Breast epithelium (tissue), 4 donors: ENCODE measurements at regions of chr5 and their contacts with region 1.

Region 1: DNA sequence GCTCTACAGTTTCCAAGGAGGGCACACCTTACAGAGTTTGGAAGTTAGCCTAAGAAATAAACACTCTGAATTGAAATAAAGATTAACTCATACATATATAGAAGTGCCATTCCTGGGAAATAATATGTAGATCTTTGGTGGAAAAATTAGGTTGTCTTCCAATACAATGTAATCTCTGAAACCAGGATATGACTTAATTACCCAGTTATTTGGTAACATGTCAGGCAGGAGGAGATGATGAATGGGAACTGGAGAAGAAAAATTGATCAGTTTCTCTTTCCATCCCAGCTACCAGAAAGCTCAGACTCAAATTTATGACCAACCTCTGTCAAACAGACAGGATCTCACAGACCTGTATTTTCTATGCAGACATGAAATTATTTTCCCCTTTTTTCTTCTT is 215.2 kb upstream of the SNX2 start:
- DNase-seq: no peak
- H3K4me3 ChIP-seq: no peak overlapping the region
- H3K27ac ChIP-seq: no peak overlapping the region
- H3K4me1 ChIP-seq: no peaks in the 10 kb centered on the region
- H3K27me3 ChIP-seq: no peaks in the 10 kb centered on the region
- CTCF ChIP-seq: no peak
- POLR2A ChIP-seq: no peak

Region 2: GRCh38 chr5:122468351-122469116 is 91.1 kb before region 1 on chr5:
- intact Hi-C with region 1: loop called (anchors 5 kb)
- DNase-seq: no peak
- H3K4me3 ChIP-seq: no peak overlapping the region
- H3K27ac ChIP-seq: no peak overlapping the region
- H3K4me1 ChIP-seq: no peaks in the 10 kb centered on the region
- H3K27me3 ChIP-seq: no peaks in the 10 kb centered on the region
- CTCF ChIP-seq: no peak
- POLR2A ChIP-seq: no peak